ENCODE measurements at regions of chr1 and their contacts with region 1.

Region 1: GRCh38 chr1:40774266-40774998 is 9.2 kb upstream of the KCNQ4 start:
- DNase-seq: no peak
- H3K4me3 ChIP-seq: no peak overlapping the region
- H3K27ac ChIP-seq: peak overlapping the region in 1 of 2 donors; percentile 46
- H3K4me1 ChIP-seq: no peaks in the 10 kb centered on the region
- H3K27me3 ChIP-seq: no peaks in the 10 kb centered on the region
- CTCF ChIP-seq: peak; percentile 59 to 79 (median 60)

Region 2: GRCh38 chr1:40820251-40820797 is 45.9 kb after region 1 on chr1:
- intact Hi-C with region 1: loop called (anchors 2 kb)
- DNase-seq: no peak
- H3K4me3 ChIP-seq: no peak overlapping the region
- H3K27ac ChIP-seq: peak overlapping the region; percentile 69 to 78
- H3K4me1 ChIP-seq: peaks cover 31 to 37% of the 10 kb centered on the region in 2 donors
- H3K27me3 ChIP-seq: no peaks in the 10 kb centered on the region
- CTCF ChIP-seq: peak in 1 of 3 experiments; percentile 15

Region 3: GRCh38 chr1:40971966-40972365 is 197.5 kb after region 1 on chr1:
- intact Hi-C with region 1: no loop called
- DNase-seq: no peak
- H3K4me3 ChIP-seq: no peak overlapping the region
- H3K27ac ChIP-seq: no peak overlapping the region
- H3K4me1 ChIP-seq: peaks cover 0 to 4% of the 10 kb centered on the region in 2 donors
- H3K27me3 ChIP-seq: no peaks in the 10 kb centered on the region
- CTCF ChIP-seq: no peak